ENCODE measurements at regions of chr2 and their contacts with region 1.

Region 1: GRCh38 chr2:98736464-98736889 is 5.5 kb upstream of the MGAT4A start:
- DNase-seq: no peak

Region 2: DNA sequence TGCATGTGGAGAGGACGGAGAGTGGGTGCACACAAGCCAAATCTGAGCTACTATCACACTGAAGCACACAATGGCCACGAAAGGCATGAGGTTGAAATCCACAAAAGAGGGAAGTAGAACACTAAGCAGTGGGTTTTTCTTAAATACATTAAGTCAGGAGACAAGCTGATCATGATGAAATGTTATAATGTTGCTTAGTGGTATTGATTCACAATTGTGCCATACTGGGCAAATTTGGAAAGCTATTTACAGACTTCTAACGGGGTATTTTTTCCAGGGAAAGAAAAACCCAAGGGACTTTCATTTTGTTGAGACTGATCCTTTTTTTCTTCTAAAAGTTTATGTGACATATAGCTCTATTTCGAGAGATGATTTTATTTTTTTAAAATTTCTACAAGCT is 491.0 kb before region 1 on chr2:
- intact Hi-C with region 1: loop called in 1 of 2 experiments (anchors 5 kb)
- DNase-seq: no peak

Region 3: GRCh38 chr2:98757904-98758421 is 21.5 kb after region 1 on chr2:
- intact Hi-C with region 1: no loop called
- DNase-seq: peak; percentile 88